Activated naive CD4-positive, alpha-beta T cell treated with anti-CD3 and anti-CD28 coated beads for 36 hours (primary cell): ENCODE measurements at regions of chr9 and their contacts with region 1.

Region 1: GRCh38 chr9:122991370-122991830 is 42.1 kb upstream of the GPR21 start:
- DNase-seq: peak; percentile 49
- H3K4me3 Mint-ChIP-seq: no peak overlapping the region
- H3K27ac Mint-ChIP-seq: no peak overlapping the region
- H3K4me1 Mint-ChIP-seq: peaks cover 7% of the 10 kb centered on the region
- H3K27me3 Mint-ChIP-seq: no peaks in the 10 kb centered on the region

Region 2: DNA sequence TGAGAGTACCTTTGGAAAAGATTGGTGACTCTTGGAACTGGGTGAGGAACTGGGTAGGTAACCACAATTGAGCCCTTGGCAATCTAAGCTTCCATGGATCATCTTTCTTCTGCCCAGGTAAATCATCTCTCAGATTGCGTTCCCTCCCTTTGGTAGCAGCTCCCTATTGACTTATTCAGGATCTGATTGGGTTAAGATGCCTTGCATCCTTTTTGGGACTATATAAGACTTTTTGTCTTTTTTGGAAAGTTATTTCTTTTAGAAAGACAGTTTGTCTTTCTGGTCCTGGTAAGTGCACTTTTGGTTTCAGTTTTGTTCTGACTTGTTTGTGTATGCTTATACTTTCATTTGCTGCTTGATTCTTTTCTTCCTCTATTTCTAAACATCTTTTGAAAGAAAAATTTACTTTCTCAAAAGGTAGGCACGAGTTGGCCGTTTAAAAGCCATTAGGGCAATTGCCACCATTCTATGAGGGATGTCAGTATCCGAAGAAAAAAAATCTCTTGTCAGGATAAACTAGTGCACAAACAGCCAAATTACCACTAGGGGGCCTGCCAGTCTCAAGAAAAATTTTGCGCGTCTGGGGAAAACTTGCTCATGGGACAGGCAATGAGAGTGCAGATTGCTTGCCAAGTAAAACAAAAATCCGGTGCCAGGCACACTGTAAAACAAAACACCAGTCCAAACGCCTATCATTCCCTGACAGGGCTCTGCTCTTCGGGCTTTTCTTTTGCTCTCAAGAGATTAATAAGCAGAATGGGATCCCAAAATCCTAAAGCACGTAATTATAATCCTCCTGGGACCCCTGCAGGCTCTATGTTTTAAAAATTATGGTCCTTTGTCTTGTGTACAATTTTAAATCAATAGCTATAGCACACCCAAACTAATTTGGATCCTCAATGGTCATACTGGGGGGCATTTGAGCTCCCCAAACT is 526.5 kb before region 1 on chr9:
- CTCF ChIA-PET with region 1: interaction called, 3 read pairs
- intact Hi-C with region 1: loop called (anchors 1 kb)
- DNase-seq: peak; percentile 83
- H3K4me3 Mint-ChIP-seq: peak overlapping the region; percentile 72
- H3K27ac Mint-ChIP-seq: peak overlapping the region; percentile 68
- H3K4me1 Mint-ChIP-seq: peaks cover 11% of the 10 kb centered on the region
- H3K27me3 Mint-ChIP-seq: peaks cover 17% of the 10 kb centered on the region

Region 3: GRCh38 chr9:122498883-122499288 is 492.5 kb before region 1 on chr9:
- CTCF ChIA-PET with region 1: no interaction called
- intact Hi-C with region 1: loop called (anchors 10 kb)
- DNase-seq: peak; percentile 38
- H3K4me3 Mint-ChIP-seq: no peak overlapping the region
- H3K27ac Mint-ChIP-seq: no peak overlapping the region
- H3K4me1 Mint-ChIP-seq: no peaks in the 10 kb centered on the region
- H3K27me3 Mint-ChIP-seq: peaks cover 16% of the 10 kb centered on the region

Region 4: GRCh38 chr9:122816163-122816867 is 175.1 kb before region 1 on chr9:
- CTCF ChIA-PET with region 1: interaction called, 3 read pairs
- intact Hi-C with region 1: loop called (anchors 2 kb)
- DNase-seq: peak; percentile 66
- H3K4me3 Mint-ChIP-seq: peak overlapping the region; percentile 65
- H3K27ac Mint-ChIP-seq: peak overlapping the region; percentile 89
- H3K4me1 Mint-ChIP-seq: peaks cover 22% of the 10 kb centered on the region
- H3K27me3 Mint-ChIP-seq: no peaks in the 10 kb centered on the region

Region 5: DNA sequence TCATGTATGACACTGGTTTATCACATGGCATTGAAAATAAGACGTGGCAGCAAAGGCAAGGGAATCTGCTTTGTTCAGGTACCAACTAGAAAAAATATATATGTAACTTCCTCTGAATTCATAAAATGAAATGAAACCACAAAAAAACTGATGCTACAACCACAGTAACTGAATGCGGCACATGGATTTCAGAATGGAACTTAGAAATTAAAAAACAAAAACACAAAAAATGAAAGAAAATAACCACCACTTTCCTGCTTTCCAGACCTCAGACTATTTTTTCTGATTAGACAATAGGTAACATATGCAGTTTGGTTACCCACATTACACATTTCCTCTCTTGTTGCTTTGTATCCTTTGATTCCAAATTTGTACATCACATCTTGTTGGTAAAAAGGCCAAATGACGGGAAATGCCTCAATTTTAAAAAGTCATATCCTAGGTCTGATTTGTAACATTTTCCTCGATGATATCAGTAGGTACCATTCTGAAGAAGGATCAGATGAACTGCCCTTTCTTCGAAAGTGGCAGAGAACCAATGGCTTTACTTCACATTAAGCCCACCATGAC is 144.9 kb before region 1 on chr9:
- CTCF ChIA-PET with region 1: no interaction called
- intact Hi-C with region 1: loop called (anchors 10 kb)
- DNase-seq: no peak
- H3K4me3 Mint-ChIP-seq: no peak overlapping the region
- H3K27ac Mint-ChIP-seq: peak overlapping the region; percentile 79
- H3K4me1 Mint-ChIP-seq: peaks cover 28% of the 10 kb centered on the region
- H3K27me3 Mint-ChIP-seq: no peaks in the 10 kb centered on the region

Region 6: DNA sequence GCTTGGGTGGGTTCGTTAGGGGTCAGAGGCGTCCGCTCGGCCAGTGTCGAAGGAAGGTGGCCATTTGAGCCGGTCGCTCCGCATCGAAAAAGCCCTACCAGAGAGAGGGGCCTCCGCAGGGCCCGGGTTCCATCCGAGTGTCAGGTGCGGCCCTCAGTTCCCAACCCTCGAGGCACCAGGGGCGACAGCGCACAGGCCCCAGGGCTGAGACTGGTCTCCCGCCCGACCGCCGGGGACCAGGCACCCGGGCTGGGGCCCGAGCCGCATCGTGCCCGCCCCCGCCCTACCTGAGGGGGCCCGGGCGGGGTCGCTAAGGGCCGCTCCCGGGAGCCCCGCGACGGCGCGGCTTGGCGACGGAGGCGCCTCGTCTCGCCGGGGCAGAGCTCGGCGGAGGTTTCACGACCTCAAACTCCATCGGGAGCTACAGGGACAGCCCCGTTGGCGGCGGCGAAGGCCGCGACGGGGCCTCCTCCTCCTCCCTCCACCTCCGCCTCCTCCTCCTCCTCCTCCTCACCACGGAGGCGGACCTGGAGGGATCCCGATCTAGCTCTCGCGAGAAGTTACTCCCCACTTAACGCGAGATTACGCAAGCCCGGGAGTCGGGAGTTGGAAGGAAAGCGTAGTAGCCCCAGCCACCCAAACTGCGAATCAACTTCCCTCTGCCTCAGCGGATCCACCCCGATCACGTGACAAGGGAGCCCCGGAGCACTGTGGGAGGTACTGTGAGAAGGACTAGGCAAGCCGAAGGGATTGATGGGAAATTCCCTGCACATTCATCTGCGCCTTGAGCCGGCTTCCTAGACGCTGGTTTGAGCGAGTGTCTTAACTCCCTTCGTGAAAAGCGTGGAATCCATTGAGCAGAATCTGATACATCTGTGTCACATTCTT is 86.3 kb before region 1 on chr9 and contains the start of gene RC3H2:
- CTCF ChIA-PET with region 1: no interaction called
- intact Hi-C with region 1: loop called (anchors 2 kb)
- DNase-seq: peak; percentile 99
- H3K4me3 Mint-ChIP-seq: peak within 1 kb of the TSS; percentile 89
- H3K27ac Mint-ChIP-seq: peak within 1 kb of the TSS; percentile 94
- H3K4me1 Mint-ChIP-seq: peaks cover 18% of the 10 kb centered on the region
- H3K27me3 Mint-ChIP-seq: no peaks in the 10 kb centered on the region
- total RNA-seq, gene RC3H2: 20.2 to 21.3 TPM

Region 7: DNA sequence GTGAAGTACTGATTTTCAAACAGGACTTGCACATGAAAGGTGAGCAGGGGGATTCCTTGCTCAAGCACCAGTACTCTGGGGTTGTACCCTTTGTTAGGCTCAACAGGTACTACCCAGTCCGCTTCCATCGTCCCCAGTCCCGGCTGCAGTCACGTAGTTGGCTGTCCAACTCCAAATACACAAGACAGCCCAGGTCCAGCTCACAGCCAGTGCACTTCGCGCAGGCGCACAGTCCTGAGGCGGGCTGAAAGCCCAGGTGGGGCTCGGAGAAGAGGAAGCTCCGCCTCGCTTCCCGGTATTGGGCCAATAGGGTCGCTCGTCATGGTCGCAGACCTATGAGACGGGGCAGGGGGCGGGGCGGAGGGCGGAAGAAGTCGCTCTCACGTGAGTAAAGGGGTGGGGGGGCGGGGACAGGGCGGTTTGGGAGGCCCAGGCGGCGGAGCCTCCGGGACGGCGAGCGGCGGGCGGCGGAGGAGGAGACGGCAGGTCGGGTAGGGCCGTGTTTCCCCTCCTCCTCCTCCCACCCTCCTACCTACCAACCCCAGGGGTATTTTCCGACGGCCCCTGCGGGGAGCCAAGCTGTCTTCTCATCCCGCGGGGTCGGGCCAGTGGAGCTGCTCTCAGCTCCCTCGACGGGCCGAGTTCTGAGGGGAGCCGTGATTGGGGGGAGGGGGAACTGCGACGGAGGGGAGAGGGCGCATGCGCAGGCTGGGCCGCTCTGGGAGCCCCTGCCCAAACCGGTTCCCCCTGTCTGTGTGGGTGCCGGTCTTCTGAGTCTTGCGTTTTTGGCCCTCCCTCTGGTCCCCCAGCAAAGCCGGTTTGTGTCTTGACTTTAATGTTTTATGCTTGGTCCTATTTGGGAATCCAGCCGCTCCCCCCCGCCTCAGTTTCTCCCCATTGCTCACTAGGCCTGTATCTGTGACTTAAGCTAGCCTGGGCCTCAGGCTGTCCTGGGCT is 50.5 kb before region 1 on chr9 and contains the start of gene RABGAP1:
- CTCF ChIA-PET with region 1: interaction called, 4 read pairs
- intact Hi-C with region 1: loop called (anchors 5 kb)
- DNase-seq: peak; percentile 99
- H3K4me3 Mint-ChIP-seq: peak within 1 kb of the TSS; percentile 96
- H3K27ac Mint-ChIP-seq: peak within 1 kb of the TSS; percentile 83
- H3K4me1 Mint-ChIP-seq: peaks cover 37% of the 10 kb centered on the region
- H3K27me3 Mint-ChIP-seq: no peaks in the 10 kb centered on the region
- total RNA-seq, gene RABGAP1: 19.7 to 21.3 TPM

Region 8: GRCh38 chr9:123669346-123669745 is 677.9 kb after region 1 on chr9:
- CTCF ChIA-PET with region 1: no interaction called
- intact Hi-C with region 1: no loop called
- DNase-seq: no peak
- H3K4me3 Mint-ChIP-seq: no peak overlapping the region
- H3K27ac Mint-ChIP-seq: no peak overlapping the region
- H3K4me1 Mint-ChIP-seq: no peaks in the 10 kb centered on the region
- H3K27me3 Mint-ChIP-seq: no peaks in the 10 kb centered on the region